ENCODE measurements at regions of chr1 and their contacts with region 1.

Region 1: DNA sequence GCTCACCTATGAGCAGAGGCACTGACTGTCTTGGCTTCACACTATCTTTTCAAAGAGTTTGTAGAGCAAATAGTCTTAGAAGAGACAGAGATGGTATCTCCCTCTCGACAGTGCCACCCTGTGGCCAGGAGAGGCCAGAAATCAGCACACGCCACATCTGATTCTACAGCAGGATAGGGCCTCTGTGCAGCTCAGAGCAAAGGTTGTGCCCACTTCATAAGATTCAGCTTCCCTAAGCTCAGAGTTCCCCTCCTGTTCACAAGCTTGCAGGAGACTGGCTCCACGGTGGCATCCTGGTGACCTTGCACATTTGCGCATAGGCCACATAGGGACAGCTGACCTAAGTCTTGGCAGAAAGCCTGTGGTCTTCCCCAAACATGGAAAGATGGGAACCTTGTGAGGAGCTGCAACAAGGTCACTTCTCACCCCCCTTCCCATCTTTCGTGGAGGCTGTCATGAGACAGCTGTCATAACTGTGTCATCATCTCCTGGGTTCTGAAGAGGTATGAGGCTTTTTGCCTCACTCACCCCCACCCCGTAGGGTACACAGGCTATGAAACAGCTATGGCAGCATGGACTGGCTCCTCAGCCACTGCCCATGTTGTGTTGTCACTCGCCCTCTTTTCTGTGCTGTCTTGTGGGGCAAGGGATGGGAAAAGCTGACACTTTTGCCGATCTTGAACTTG is 3.0 kb downstream of the ITLN2 start:
- DNase-seq: peak; percentile 40 to 62
- H3K4me3 ChIP-seq: no peak overlapping the region
- H3K27ac ChIP-seq: no peak overlapping the region
- H3K4me1 ChIP-seq: no peaks in the 10 kb centered on the region
- H3K27me3 ChIP-seq: no peaks in the 10 kb centered on the region
- CTCF ChIP-seq: peak; percentile 83

Region 2: GRCh38 chr1:160726498-160727315 is 224.9 kb before region 1 on chr1:
- CTCF ChIA-PET with region 1: interaction called, 4 read pairs
- POLR2A ChIA-PET with region 1: no interaction called
- intact Hi-C with region 1: loop called (anchors 1 kb)
- DNase-seq: peak; percentile 51 to 63
- H3K4me3 ChIP-seq: no peak overlapping the region
- H3K27ac ChIP-seq: peak overlapping the region; percentile 50
- H3K4me1 ChIP-seq: peaks cover 18% of the 10 kb centered on the region
- H3K27me3 ChIP-seq: no peaks in the 10 kb centered on the region
- CTCF ChIP-seq: peak; percentile 93

Region 3: GRCh38 chr1:161359291-161359690 is 407.7 kb after region 1 on chr1:
- CTCF ChIA-PET with region 1: interaction called, 13 read pairs
- POLR2A ChIA-PET with region 1: no interaction called
- intact Hi-C with region 1: no loop called
- DNase-seq: no peak
- H3K4me3 ChIP-seq: no peak overlapping the region
- H3K27ac ChIP-seq: no peak overlapping the region
- H3K4me1 ChIP-seq: no peaks in the 10 kb centered on the region
- H3K27me3 ChIP-seq: no peaks in the 10 kb centered on the region
- CTCF ChIP-seq: no peak

Region 4: GRCh38 chr1:161718559-161719324 is 767.2 kb after region 1 on chr1:
- CTCF ChIA-PET with region 1: no interaction called
- POLR2A ChIA-PET with region 1: no interaction called
- intact Hi-C with region 1: no loop called
- DNase-seq: no peak
- H3K4me3 ChIP-seq: no peak overlapping the region
- H3K27ac ChIP-seq: no peak overlapping the region
- H3K4me1 ChIP-seq: peaks cover 26% of the 10 kb centered on the region
- H3K27me3 ChIP-seq: no peaks in the 10 kb centered on the region
- CTCF ChIP-seq: no peak

Measured in PC-9 (cell line).